ENCODE measurements at regions of chr19 and their contacts with region 1.

Region 1: GRCh38 chr19:16014923-16015804 is 61.1 kb upstream of the TPM4 start:
- DNase-seq: no peak
- H3K4me3 ChIP-seq: no peak overlapping the region
- H3K27me3 ChIP-seq: no peaks in the 10 kb centered on the region
- CTCF ChIP-seq: no peak

Region 2: DNA sequence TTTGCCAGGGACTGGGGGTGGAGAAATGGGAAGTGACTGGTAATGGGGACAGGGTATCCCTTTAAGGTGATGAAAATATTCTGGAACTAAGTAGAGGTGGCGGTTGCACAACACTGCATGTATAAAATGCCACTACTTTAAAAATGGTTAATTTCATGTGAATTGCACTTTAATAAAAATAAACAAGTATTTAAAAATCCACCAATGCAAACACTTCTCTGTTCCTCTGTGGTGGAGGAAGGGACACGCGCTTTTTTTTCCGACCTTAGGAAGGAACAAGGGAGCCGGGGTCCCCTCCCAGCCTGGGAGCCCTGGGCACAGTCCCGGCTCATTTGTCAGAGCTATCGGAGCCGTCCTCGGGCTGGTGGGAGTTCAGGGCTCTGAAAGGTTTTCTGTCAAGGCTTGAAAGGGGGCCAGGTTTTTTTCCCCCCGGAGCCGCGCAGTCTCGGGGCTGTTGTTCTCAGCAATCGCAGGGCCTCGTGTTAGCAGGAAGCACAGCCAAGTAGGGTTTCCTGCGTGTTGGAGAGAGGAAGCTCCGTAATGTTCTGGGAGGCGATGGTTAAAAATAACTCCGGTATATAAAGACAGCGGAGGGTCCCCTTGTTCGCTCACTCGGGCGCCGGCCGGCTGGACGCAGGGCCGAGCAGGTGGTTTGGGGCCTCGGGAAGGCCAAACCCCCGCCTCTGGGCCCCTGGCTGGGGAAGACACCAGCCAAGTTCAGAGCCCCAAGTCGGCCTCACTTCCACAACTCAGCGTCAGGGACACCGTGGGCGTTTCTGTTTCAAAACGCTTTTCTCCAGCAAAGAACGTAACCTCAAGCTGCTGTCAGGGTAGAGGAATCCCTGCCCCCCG is 268.3 kb after region 1 on chr19:
- CTCF ChIA-PET with region 1: no interaction called
- POLR2A ChIA-PET with region 1: interaction called, 15 read pairs
- DNase-seq: no peak
- H3K4me3 ChIP-seq: peak overlapping the region; percentile 5; the same call in 1 of the 2 replicates
- H3K27me3 ChIP-seq: peaks cover 20% of the 10 kb centered on the region
- CTCF ChIP-seq: no peak

Measured in BJ (cell line).